ENCODE measurements at regions of chr17 and their contacts with region 1.

Region 1: DNA sequence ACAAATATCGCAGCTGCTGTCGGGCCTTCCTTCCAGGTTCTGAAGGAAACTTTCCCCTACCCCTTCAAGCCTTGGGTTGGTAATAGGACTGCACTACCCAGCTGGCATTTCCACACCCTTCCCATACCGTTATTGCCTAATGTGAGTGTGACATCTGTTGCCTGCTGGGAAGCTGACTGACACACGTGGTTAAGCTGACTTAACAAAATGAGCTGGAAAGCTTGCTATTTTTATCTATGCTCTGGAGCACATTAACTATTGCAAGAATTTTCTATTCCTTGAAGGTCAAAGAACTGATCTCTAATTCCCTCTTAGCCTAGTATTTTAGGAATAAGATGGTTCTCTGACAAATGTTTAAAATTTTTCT is 79.5 kb downstream of the PMP22 start:
- DNase-seq: peak; percentile 36
- ATAC-seq: 0 out of 2 replicates have a peak, but pooled peaks have one; percentile 21
- H3K4me3 ChIP-seq: no peak overlapping the region
- H3K27ac ChIP-seq: no peak overlapping the region
- H3K4me1 ChIP-seq: no peaks in the 10 kb centered on the region
- H3K27me3 ChIP-seq: peaks cover 17% of the 10 kb centered on the region
- CTCF ChIP-seq: no peak
- POLR2A ChIP-seq: no peak
- RAD21 ChIP-seq: no peak

Region 2: DNA sequence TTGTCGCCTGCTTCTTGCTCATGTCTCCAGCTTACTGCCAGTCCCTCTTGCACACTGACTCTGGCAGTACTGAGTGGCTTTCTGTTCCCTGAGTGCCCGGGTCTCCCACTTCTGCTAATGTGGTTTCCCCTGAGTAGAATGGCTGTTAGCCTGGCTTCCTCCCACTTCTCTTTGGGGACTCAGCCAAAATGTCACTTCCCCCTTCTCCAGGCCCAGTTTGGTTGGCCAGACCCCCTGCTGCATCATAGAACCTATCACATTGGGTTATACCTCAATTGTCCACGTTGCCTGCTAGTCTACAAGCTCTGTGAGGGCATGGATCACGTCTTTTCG is 580.4 kb before region 1 on chr17:
- CTCF ChIA-PET with region 1: no interaction called
- POLR2A ChIA-PET with region 1: no interaction called
- dilution Hi-C with region 1: no loop called
- in situ Hi-C with region 1: no loop called
- intact Hi-C with region 1: no loop called
- DNase-seq: no peak
- ATAC-seq: no peak
- H3K4me3 ChIP-seq: no peak overlapping the region
- H3K27ac ChIP-seq: no peak overlapping the region
- H3K4me1 ChIP-seq: no peaks in the 10 kb centered on the region
- H3K27me3 ChIP-seq: no peaks in the 10 kb centered on the region; the same call in none of the 2 replicates
- CTCF ChIP-seq: no peak
- POLR2A ChIP-seq: no peak
- RAD21 ChIP-seq: no peak

Region 3: DNA sequence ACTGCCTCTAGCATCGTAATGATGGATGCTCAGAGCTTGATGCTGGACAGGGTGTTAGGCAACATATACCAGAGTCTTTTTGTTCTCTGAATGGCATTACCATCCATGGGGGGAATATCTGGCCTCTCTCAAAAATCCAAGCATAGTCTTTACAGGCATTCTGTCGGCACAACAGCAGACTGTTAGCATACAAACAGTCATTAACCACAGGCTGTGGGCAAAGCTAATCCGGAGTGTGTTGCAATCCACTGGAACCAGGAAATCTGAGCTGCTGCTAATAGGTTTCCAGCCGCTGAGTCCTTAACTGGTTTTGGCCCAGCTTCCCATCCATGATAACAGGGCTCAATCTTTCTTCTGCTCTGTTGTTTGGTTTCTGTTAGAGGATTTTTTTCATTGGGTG is 512.8 kb before region 1 on chr17:
- CTCF ChIA-PET with region 1: no interaction called
- POLR2A ChIA-PET with region 1: no interaction called
- dilution Hi-C with region 1: no loop called
- in situ Hi-C with region 1: loop called (anchors 25 kb)
- intact Hi-C with region 1: no loop called
- DNase-seq: peak; percentile 47
- ATAC-seq: peak; percentile 70
- H3K4me3 ChIP-seq: no peak overlapping the region
- H3K27ac ChIP-seq: no peak overlapping the region
- H3K4me1 ChIP-seq: no peaks in the 10 kb centered on the region
- H3K27me3 ChIP-seq: peaks cover 5% of the 10 kb centered on the region; the same call in 1 of the 2 replicates
- CTCF ChIP-seq: no peak
- POLR2A ChIP-seq: no peak
- RAD21 ChIP-seq: no peak

Region 4: DNA sequence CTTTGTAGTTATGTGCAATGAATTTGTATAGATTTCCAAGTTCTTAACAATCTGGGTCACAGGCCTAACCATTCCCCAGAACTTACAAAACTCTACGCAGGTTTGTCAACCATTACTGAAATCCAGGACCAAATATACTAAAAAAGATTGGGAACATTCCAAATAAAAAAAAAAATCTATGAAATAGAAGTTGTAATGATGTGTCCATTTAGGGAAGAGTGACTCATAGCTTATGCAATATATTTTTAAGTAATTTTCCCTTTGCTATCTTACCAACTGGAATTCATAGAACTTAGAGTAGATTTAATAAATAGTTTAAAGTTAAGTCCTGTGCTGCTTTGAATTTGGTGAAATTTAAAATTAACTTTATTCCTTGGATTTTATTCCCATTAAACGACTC is 313.7 kb before region 1 on chr17:
- CTCF ChIA-PET with region 1: no interaction called
- POLR2A ChIA-PET with region 1: no interaction called
- dilution Hi-C with region 1: no loop called
- in situ Hi-C with region 1: no loop called
- intact Hi-C with region 1: no loop called
- DNase-seq: peak; percentile 69
- ATAC-seq: peak; percentile 60
- H3K4me3 ChIP-seq: no peak overlapping the region
- H3K27ac ChIP-seq: no peak overlapping the region
- H3K4me1 ChIP-seq: peaks cover 2% of the 10 kb centered on the region; the same call in 1 of the 2 replicates
- H3K27me3 ChIP-seq: no peaks in the 10 kb centered on the region
- CTCF ChIP-seq: no peak
- POLR2A ChIP-seq: no peak
- RAD21 ChIP-seq: no peak

Region 5: DNA sequence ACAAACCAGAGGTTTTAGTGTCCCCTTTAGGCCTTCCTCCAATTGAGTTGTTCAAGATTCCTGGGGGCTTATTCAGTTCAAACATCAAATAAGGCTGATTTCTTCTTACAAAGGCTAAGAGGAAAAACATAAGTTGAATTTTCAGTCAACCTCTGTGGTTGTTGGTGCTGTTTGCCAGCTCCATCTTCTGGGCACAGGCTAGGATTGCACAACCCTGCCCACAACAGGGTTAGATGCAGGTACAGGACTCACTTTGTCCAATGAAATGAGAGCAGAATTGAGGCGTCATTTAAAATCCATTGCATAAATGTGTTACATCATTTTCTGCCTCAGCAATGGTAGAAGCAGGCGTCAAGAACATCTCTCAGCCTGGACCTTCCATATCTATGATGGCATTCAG is 93.8 kb before region 1 on chr17:
- CTCF ChIA-PET with region 1: no interaction called
- POLR2A ChIA-PET with region 1: no interaction called
- dilution Hi-C with region 1: no loop called
- in situ Hi-C with region 1: no loop called
- intact Hi-C with region 1: no loop called
- DNase-seq: no peak
- ATAC-seq: no peak
- H3K4me3 ChIP-seq: no peak overlapping the region
- H3K27ac ChIP-seq: no peak overlapping the region
- H3K4me1 ChIP-seq: no peaks in the 10 kb centered on the region
- H3K27me3 ChIP-seq: peaks cover 2% of the 10 kb centered on the region; the same call in 1 of the 2 replicates
- CTCF ChIP-seq: 0 out of 2 replicates have a peak, but pooled peaks have one; percentile 5
- POLR2A ChIP-seq: no peak
- RAD21 ChIP-seq: no peak

Region 6: DNA sequence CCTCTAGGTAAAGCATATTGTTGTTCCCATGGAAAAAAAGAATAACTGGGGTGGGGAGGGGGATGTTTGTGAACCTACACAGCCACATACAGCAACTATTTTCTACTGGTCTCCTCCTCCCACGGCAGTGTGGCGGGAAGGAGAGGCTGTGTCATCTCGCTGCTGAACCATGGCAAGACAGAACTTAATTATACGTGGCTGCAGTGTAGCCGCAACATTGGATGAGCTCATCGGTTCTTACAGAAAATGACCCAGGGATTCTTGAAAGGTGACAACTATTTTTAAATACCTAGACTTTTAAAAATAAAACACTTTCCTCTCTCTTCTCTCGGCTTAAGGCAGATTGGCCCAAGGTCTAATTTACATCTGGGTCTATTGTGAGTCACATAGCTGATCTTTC is 175.5 kb after region 1 on chr17:
- CTCF ChIA-PET with region 1: no interaction called
- POLR2A ChIA-PET with region 1: no interaction called
- dilution Hi-C with region 1: no loop called
- in situ Hi-C with region 1: no loop called
- intact Hi-C with region 1: no loop called
- DNase-seq: no peak
- ATAC-seq: no peak
- H3K4me3 ChIP-seq: no peak overlapping the region
- H3K27ac ChIP-seq: no peak overlapping the region
- H3K4me1 ChIP-seq: peaks cover 5% of the 10 kb centered on the region
- H3K27me3 ChIP-seq: no peaks in the 10 kb centered on the region
- CTCF ChIP-seq: no peak
- POLR2A ChIP-seq: no peak
- RAD21 ChIP-seq: no peak

Measured in IMR-90 (cell line).